ENCODE measurements at regions of chr10 and their contacts with region 1.

Region 1: GRCh38 chr10:29304264-29305030 is 15.6 kb downstream of the LYZL1 start:
- DNase-seq: peak in 4 of 6 donors; percentile 32 to 69 (median 38)
- ATAC-seq: peak; percentile 89 to 96 (median 95)
- H3K4me3 ChIP-seq: no peak overlapping the region
- H3K27ac ChIP-seq: no peak overlapping the region
- H3K4me1 ChIP-seq: no peaks in the 10 kb centered on the region
- H3K27me3 ChIP-seq: no peaks in the 10 kb centered on the region
- CTCF ChIP-seq: peak; percentile 42 to 72 (median 64)

Region 2: GRCh38 chr10:28631896-28632596 is 672.4 kb before region 1 on chr10:
- intact Hi-C with region 1: loop called in 1 of 3 experiments (anchors 10 kb)
- DNase-seq: no peak
- ATAC-seq: no peak
- H3K4me3 ChIP-seq: no peak overlapping the region
- H3K27ac ChIP-seq: no peak overlapping the region
- H3K4me1 ChIP-seq: no peaks in the 10 kb centered on the region
- H3K27me3 ChIP-seq: no peaks in the 10 kb centered on the region
- CTCF ChIP-seq: no peak

Region 3: DNA sequence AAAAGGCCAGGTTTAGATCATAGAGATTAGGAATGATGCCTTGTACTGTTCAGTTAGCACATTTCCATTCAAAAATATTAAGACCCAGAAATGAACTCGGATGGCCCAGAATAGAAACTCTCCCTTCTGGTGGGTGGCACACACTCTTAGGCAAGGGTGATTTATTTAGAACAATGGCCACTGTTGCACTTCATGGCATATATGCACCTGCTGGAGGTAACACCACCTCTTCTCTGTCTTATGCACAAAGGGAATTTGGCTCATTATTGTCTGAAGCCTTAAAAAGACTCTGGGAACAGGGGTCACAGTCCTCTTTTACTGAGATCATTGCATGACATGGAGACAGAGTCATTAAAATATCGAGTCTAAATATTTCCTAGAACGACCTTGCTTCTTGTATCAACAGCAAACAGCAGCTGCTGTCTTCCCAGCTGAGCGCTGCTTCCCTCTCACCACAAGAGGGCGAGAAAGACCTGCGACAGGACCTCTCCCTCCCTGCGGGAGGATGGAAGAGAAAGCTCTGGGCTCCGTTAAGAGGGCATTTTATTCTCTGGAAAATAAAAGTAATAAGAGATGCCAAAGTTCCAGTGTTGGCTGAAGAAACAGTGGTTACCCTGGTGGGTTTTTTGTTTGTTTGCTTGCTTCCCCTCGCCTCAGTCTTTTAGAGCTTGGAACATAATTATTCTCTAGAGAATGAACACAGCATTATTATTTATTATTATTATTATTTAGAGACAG is 640.7 kb before region 1 on chr10:
- intact Hi-C with region 1: loop called in 1 of 3 experiments (anchors 10 kb)
- DNase-seq: peak; percentile 80 to 92 (median 84)
- ATAC-seq: peak; percentile 97 to 99 (median 98)
- H3K4me3 ChIP-seq: no peak overlapping the region
- H3K27ac ChIP-seq: no peak overlapping the region
- H3K4me1 ChIP-seq: peaks cover 0 to 4% (median 0%) of the 10 kb centered on the region in 3 donors
- H3K27me3 ChIP-seq: peaks cover 0 to 6% (median 3%) of the 10 kb centered on the region in 4 donors
- CTCF ChIP-seq: peak; percentile 81 to 97 (median 92)

Measured in pancreas (tissue), 10 donors.